OCI-LY7 (cell line): ENCODE measurements at regions of chr10 and their contacts with region 1.

Region 1: GRCh38 chr10:21270976-21271375 is 254.5 kb downstream of the SKIDA1 start:
- DNase-seq: no peak
- H3K4me3 ChIP-seq: no peak overlapping the region
- H3K27ac ChIP-seq: no peak overlapping the region
- H3K4me1 ChIP-seq: no peaks in the 10 kb centered on the region
- CTCF ChIP-seq: no peak

Region 2: DNA sequence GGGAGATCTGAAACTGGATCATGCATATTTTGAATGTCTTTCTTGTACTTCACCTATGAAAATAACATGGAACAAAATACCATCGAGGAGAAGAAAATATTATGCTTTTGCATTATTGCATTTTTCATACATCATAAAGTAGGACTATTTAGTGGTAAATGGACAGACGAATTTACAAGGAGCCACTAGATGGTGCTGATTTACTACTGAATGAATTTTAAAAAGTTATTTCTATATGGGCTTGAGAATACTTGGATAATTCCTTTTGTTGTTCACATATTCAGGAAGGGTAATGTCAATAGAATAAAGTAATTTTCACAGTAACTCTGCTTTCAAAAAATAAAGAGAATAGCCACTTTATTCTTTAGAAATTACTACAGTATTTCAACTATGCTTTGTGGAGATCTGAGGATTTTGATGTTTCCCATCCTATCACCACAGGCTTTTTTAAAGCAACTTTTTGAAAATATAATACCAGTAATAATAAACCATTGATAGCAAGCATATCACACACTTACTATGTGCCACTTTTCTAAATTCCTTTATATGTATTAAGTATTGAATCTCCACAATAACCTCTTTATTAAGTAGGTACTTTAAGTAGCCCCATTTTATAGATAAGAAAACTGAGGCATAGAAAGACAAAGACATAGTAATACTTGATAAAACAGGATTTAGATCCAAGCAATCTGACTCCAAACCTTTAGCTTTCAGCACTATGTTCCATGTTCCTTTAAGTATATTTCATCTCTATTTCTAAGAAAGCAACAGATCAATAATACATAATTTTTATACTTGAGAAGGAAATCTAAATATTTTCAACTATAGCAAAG is 412.5 kb before region 1 on chr10:
- CTCF ChIA-PET with region 1: no interaction called
- POLR2A ChIA-PET with region 1: no interaction called
- intact Hi-C with region 1: loop called (anchors 1 kb)
- DNase-seq: peak; percentile 44
- H3K4me3 ChIP-seq: no peak overlapping the region
- H3K27ac ChIP-seq: no peak overlapping the region
- H3K4me1 ChIP-seq: no peaks in the 10 kb centered on the region
- CTCF ChIP-seq: peak; percentile 89

Region 3: DNA sequence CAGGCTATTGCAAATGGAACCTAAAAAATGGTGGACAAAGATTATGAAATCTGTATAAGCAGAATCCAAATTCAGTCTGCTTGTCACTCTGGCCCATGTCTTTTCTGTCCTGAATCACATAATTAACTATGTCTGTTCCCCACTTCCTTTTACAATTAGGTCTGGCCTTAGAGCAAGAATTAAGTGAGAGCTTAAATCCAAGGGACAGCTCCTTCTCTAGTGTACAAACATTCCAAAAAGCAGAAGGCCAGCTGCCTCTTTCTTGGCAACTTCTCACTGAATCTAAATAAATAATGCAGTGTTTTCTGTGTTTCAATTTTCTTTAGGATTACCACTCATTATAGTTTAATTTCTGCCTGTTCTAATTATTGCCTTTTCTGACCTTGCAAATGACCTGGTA is 334.6 kb before region 1 on chr10:
- CTCF ChIA-PET with region 1: no interaction called
- POLR2A ChIA-PET with region 1: no interaction called
- intact Hi-C with region 1: no loop called
- DNase-seq: no peak
- H3K4me3 ChIP-seq: no peak overlapping the region
- H3K27ac ChIP-seq: no peak overlapping the region
- H3K4me1 ChIP-seq: no peaks in the 10 kb centered on the region
- CTCF ChIP-seq: no peak

Region 4: GRCh38 chr10:21078410-21079329 is 192.3 kb before region 1 on chr10:
- CTCF ChIA-PET with region 1: no interaction called
- POLR2A ChIA-PET with region 1: no interaction called
- intact Hi-C with region 1: loop called (anchors 2 kb)
- DNase-seq: peak; percentile 47
- H3K4me3 ChIP-seq: no peak overlapping the region
- H3K27ac ChIP-seq: no peak overlapping the region
- H3K4me1 ChIP-seq: no peaks in the 10 kb centered on the region
- CTCF ChIP-seq: peak; percentile 85